Mammary epithelial cell (primary cell): ENCODE measurements at regions of chr16 and their contacts with region 1.

Region 1: DNA sequence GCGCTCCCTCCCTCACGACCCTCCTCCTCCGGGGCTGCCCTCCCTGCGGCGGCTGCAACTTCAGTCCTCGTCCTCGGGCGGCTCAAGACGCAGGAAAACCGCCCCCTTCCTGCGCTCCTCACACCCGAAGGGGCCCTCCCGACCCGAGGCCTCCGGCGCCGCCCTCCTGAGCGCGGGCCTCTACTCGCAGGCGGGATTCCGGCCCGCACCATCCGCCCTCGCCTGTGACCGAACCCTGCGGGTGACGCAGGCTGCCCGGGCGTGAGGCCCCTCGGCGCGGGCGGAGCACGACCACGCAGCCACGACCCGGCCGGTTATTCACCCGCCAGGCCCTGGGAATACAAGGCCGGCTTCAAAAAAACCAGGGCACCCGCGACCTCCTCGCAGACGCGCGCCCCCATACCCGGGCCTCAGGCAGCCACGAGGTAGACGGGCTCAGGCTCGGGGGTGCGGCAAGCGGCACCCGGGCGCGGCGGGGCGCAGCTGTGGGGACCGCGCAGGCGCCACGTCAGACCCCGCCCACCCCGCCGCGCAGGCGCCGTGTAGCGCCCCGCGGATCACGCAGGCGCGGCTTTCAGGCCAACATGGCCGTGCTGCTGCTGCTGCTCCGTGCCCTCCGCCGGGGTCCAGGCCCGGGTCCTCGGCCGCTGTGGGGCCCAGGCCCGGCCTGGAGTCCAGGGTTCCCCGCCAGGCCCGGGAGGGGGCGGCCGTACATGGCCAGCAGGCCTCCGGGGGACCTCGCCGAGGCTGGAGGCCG is at the start of gene SPG7:
- DNase-seq: peak; percentile 82
- H3K4me3 ChIP-seq: peak within 1 kb of the TSS; percentile 53 to 96 (median 65)
- H3K27ac ChIP-seq: peak within 1 kb of the TSS; percentile 65
- H3K4me1 ChIP-seq: peaks cover 29% of the 10 kb centered on the region
- H3K27me3 ChIP-seq: no peaks in the 10 kb centered on the region
- CTCF ChIP-seq: no peak
- total RNA-seq, gene SPG7: 91.9 to 102 TPM

Region 2: DNA sequence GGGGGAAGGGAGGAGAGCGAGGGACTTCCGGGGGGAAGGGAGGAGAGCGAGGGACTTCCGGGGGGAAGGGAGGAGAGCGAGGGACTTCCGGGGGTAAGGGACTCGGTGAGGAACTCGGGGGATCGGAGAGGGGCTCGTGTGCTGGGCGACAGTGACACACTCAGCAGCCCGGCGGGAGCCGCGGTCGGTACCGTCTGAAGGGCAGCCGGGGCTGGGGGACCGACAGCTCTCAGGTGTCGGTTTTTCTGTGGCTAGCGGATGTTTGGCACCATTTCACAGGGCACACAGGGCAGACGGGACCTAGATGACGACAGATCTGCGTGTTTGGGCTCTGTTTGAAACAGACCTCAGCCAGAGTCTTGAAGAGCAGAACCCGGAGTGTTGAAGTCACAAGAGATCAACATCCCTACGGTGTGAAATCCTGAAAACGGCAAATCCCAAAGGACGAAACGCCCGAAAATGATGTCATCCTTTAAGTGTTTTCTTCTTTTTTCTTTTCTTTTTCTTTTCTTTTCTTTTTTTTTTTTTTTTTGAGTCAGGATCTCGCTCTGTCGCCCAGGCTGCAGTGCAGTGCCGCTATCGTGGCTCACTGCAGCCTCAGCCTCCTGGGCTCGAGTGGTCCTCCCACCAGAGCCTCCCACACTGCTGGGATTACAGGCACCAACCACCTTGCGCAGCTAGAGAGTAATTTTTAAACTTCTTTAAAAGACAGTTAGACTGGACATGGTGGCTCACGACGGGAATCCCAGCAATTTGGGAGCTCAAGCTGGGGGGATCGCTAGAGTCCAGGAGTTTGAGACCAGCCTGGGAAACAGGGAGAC is 266.6 kb before region 1 on chr16:
- CTCF ChIA-PET with region 1: no interaction called
- dilution Hi-C with region 1: no loop called
- in situ Hi-C with region 1: no loop called
- intact Hi-C with region 1: loop called (anchors 1 kb)
- DNase-seq: peak; percentile 70
- H3K4me3 ChIP-seq: peak overlapping the region; percentile 51 to 79 (median 77)
- H3K27ac ChIP-seq: peak overlapping the region; percentile 66
- H3K4me1 ChIP-seq: no peaks in the 10 kb centered on the region
- H3K27me3 ChIP-seq: no peaks in the 10 kb centered on the region
- CTCF ChIP-seq: no peak

Region 3: GRCh38 chr16:89319883-89320781 is 187.9 kb before region 1 on chr16:
- CTCF ChIA-PET with region 1: no interaction called
- dilution Hi-C with region 1: no loop called
- in situ Hi-C with region 1: loop called in 1 of 2 experiments (anchors 10 kb)
- intact Hi-C with region 1: no loop called
- DNase-seq: peak; percentile 91
- H3K4me3 ChIP-seq: peak overlapping the region in 2 of 3 experiments; percentile 6 to 37
- H3K27ac ChIP-seq: peak overlapping the region; percentile 69
- H3K4me1 ChIP-seq: peaks cover 90% of the 10 kb centered on the region
- H3K27me3 ChIP-seq: no peaks in the 10 kb centered on the region
- CTCF ChIP-seq: no peak

Region 4: GRCh38 chr16:89395141-89395874 is 112.7 kb before region 1 on chr16:
- CTCF ChIA-PET with region 1: no interaction called
- dilution Hi-C with region 1: loop called (anchors 5 kb)
- in situ Hi-C with region 1: no loop called
- intact Hi-C with region 1: loop called (anchors 5 kb)
- DNase-seq: peak; percentile 88
- H3K4me3 ChIP-seq: no peak overlapping the region
- H3K27ac ChIP-seq: peak overlapping the region; percentile 43
- H3K4me1 ChIP-seq: peaks cover 47% of the 10 kb centered on the region
- H3K27me3 ChIP-seq: no peaks in the 10 kb centered on the region
- CTCF ChIP-seq: no peak

Region 5: GRCh38 chr16:89442990-89443731 is 64.9 kb before region 1 on chr16:
- CTCF ChIA-PET with region 1: no interaction called
- dilution Hi-C with region 1: no loop called
- in situ Hi-C with region 1: no loop called
- intact Hi-C with region 1: loop called (anchors 1 kb)
- DNase-seq: peak; percentile 88
- H3K4me3 ChIP-seq: peak overlapping the region in 1 of 3 experiments; percentile 24
- H3K27ac ChIP-seq: peak overlapping the region; percentile 93
- H3K4me1 ChIP-seq: peaks cover 47% of the 10 kb centered on the region
- H3K27me3 ChIP-seq: no peaks in the 10 kb centered on the region
- CTCF ChIP-seq: peak; percentile 25 to 48

Region 6: DNA sequence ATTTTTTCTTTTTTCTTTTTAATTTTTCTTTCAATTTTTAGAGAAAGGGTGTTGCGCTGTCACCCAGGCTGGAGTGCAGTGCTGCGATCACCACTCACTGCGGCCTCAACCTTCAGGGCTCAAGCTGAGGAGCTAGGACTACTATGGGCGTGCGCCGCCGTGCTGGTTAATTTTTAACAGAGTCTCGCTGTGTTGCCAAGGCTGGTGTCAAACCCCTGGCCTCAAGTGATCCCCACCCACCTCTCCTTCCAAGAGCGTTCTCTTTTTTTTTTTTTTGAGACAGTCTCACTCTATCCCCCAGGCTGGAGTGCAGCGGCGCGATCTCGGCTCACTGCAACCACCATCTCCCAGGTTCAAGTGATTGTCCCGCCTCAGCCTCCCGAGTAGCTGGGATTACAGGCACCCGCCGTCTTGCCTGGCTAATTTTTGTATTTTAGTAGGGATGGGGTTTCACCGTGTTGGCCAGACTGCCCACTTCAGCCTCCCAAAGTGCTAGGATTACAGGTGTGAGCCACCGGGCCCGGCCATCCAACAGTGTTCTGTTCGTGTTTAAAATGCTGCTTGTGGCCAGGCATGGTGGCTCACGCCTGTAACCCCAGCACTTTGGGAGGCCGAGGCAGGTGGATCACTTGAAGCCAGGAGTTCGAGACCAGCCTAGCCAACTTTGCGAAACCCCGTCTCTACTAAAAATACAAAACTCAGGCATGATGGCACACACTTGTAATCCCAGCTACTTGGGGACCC is 38.0 kb after region 1 on chr16:
- CTCF ChIA-PET with region 1: interaction called, 6 read pairs
- dilution Hi-C with region 1: loop called (anchors 5 kb)
- in situ Hi-C with region 1: no loop called
- intact Hi-C with region 1: no loop called
- DNase-seq: no peak
- H3K4me3 ChIP-seq: no peak overlapping the region
- H3K27ac ChIP-seq: no peak overlapping the region
- H3K4me1 ChIP-seq: no peaks in the 10 kb centered on the region
- H3K27me3 ChIP-seq: no peaks in the 10 kb centered on the region
- CTCF ChIP-seq: no peak

Region 7: DNA sequence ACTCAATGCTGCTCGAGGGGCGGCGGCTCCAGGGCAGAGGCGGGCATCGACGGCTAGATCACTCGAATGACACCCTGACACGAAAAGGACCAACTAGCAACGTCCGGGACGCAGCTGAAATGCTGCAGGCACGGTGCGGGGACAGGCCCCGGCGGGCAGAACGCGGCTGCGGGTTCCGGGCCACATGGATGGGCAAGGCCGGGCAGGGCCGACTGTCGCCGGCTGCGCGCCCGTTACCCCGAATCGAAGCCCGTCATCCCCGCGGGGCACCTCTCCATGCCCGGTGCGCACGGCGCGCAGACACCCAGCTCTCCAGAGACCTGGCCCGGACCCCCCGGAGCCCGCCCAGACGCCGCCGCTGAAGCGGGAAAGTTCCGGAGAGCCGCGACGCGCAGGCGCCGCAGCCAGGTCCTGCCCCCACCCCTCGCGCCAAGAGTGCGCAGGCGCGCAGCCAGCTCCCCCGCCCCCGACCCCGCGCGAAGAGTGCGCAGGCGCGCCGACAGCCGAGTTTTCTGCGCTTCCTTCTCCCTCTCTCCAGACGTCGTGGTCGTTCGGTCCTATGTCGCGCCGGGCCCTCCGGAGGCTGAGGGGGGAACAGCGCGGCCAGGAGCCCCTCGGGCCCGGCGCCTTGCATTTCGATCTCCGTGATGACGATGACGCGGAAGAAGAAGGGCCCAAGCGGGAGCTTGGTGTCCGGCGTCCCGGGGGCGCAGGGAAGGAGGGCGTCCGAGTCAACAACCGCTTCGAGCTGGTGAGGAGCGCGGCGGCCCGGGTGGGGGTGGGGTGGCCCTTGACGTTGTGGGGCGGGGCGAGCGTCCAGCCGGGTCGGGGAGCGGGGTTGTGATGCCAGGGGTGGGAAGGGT is 365.3 kb after region 1 on chr16 and contains the start of gene TCF25:
- CTCF ChIA-PET with region 1: no interaction called
- dilution Hi-C with region 1: no loop called
- in situ Hi-C with region 1: no loop called
- intact Hi-C with region 1: no loop called
- DNase-seq: peak; percentile 88
- H3K4me3 ChIP-seq: peak within 1 kb of the TSS; percentile 93 to 99 (median 96)
- H3K27ac ChIP-seq: peak within 1 kb of the TSS; percentile 97
- H3K4me1 ChIP-seq: peaks cover 22% of the 10 kb centered on the region
- H3K27me3 ChIP-seq: no peaks in the 10 kb centered on the region
- CTCF ChIP-seq: no peak
- total RNA-seq, gene TCF25: 164 to 188 TPM